HepG2 (cell line): ENCODE measurements at regions of chr12 and their contacts with region 1.

Region 1: GRCh38 chr12:105420659-105421240 is 90.3 kb downstream of the C12orf75 start:
- DNase-seq: peak; percentile 45
- ATAC-seq: peak; percentile 85
- H3K4me3 ChIP-seq: no peak overlapping the region
- H3K27ac ChIP-seq: no peak overlapping the region
- H3K4me1 ChIP-seq: no peaks in the 10 kb centered on the region
- H3K27me3 ChIP-seq: no peaks in the 10 kb centered on the region
- CTCF ChIP-seq: peak; percentile 87
- EP300 ChIP-seq: no peak
- POLR2A ChIP-seq: no peak
- RAD21 ChIP-seq: peak; percentile 73

Region 2: GRCh38 chr12:106149096-106149784 is 728.5 kb after region 1 on chr12:
- CTCF ChIA-PET with region 1: interaction called, 13 read pairs
- POLR2A ChIA-PET with region 1: no interaction called
- in situ Hi-C with region 1: loop called (anchors 10 kb)
- intact Hi-C with region 1: no loop called
- DNase-seq: no peak
- ATAC-seq: no peak; the same call in 2 of the 3 replicates
- H3K4me3 ChIP-seq: no peak overlapping the region
- H3K27ac ChIP-seq: no peak overlapping the region
- H3K4me1 ChIP-seq: no peaks in the 10 kb centered on the region
- H3K27me3 ChIP-seq: no peaks in the 10 kb centered on the region
- CTCF ChIP-seq: peak; percentile 65
- EP300 ChIP-seq: no peak
- POLR2A ChIP-seq: no peak
- RAD21 ChIP-seq: peak; percentile 41; the same call in 1 of the 2 replicates

Region 3: GRCh38 chr12:106223485-106224354 is 803.0 kb after region 1 on chr12:
- CTCF ChIA-PET with region 1: interaction called, 17 read pairs
- POLR2A ChIA-PET with region 1: no interaction called
- in situ Hi-C with region 1: loop called (anchors 10 kb)
- intact Hi-C with region 1: loop called (anchors 1 kb)
- DNase-seq: peak; percentile 45
- ATAC-seq: peak; percentile 90
- H3K4me3 ChIP-seq: no peak overlapping the region
- H3K27ac ChIP-seq: no peak overlapping the region
- H3K4me1 ChIP-seq: peaks cover 11% of the 10 kb centered on the region
- H3K27me3 ChIP-seq: peaks cover 0 to 4% of the 10 kb centered on the region in 2 experiments; a peak in 1 of 5 replicates
- CTCF ChIP-seq: peak; percentile 93
- EP300 ChIP-seq: no peak
- POLR2A ChIP-seq: no peak
- RAD21 ChIP-seq: peak; percentile 84

Region 4: DNA sequence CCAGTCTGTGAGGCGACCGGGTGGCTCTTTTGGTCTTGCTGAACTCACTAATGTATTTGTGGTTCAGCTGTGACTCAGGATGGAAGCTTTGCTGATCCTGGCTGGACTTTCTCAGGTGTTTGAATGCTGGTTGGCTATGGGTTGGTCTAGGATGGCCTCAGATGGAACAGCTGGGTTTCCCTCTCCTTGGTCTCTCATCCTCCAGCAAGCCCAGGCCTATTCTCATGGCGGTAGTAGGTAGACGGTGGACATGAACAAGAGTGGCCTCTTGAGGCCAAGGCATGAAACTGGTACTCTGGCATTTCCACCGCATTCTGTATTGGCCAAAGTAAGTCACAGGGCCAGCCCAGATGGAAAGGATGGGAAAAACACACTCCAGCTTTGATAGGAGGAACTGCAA is 925.0 kb after region 1 on chr12:
- CTCF ChIA-PET with region 1: no interaction called
- POLR2A ChIA-PET with region 1: no interaction called
- in situ Hi-C with region 1: no loop called
- intact Hi-C with region 1: loop called (anchors 10 kb)
- DNase-seq: peak; percentile 77
- ATAC-seq: peak; percentile 93
- H3K4me3 ChIP-seq: no peak overlapping the region
- H3K27ac ChIP-seq: no peak overlapping the region
- H3K4me1 ChIP-seq: peaks cover 20% of the 10 kb centered on the region
- H3K27me3 ChIP-seq: peaks cover 0 to 4% of the 10 kb centered on the region in 2 experiments; a peak in 1 of 5 replicates
- CTCF ChIP-seq: peak; percentile 86
- EP300 ChIP-seq: no peak
- POLR2A ChIP-seq: no peak
- RAD21 ChIP-seq: peak; percentile 86